Endothelial cell of umbilical vein (primary cell): ENCODE measurements at regions of chr5 and their contacts with region 1.

Region 1: GRCh38 chr5:158074992-158075769 is 216.2 kb upstream of the CLINT1 start:
- DNase-seq: peak; percentile 92
- H3K4me3 ChIP-seq: peak overlapping the region in 2 of 3 experiments; percentile 8 to 50
- H3K27ac ChIP-seq: peak overlapping the region; percentile 97
- H3K4me1 ChIP-seq: peaks cover 18% of the 10 kb centered on the region
- H3K27me3 ChIP-seq: no peaks in the 10 kb centered on the region
- CTCF ChIP-seq: peak; percentile 86 to 87
- POLR2A ChIP-seq: no peak

Region 2: GRCh38 chr5:157354800-157355199 is 720.4 kb before region 1 on chr5:
- CTCF ChIA-PET with region 1: no interaction called
- POLR2A ChIA-PET with region 1: no interaction called
- dilution Hi-C with region 1: no loop called
- intact Hi-C with region 1: no loop called
- DNase-seq: no peak
- H3K4me3 ChIP-seq: no peak overlapping the region
- H3K27ac ChIP-seq: no peak overlapping the region
- H3K4me1 ChIP-seq: peaks cover 13% of the 10 kb centered on the region
- H3K27me3 ChIP-seq: no peaks in the 10 kb centered on the region
- CTCF ChIP-seq: peak; percentile 17 to 31
- POLR2A ChIP-seq: no peak

Region 3: DNA sequence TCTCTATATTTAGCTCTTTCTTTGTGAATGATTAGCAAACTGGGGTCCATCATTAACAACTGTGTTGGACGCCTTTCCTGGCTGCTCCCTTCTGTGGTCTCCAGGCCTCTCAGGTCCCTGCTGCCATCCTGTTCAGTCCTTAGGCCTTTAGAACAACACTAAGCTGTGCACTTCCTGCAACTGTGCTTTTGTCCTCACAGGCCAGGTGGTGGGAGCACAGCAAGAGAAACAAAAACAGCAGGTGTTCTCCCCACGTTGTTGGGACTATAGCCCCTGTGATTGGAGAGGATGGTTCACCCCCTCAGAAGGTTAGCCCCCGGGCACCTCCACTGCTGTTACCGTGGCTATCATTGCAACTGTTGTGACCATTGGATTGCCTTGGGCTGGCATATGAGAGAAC is 174.5 kb before region 1 on chr5:
- CTCF ChIA-PET with region 1: no interaction called
- POLR2A ChIA-PET with region 1: no interaction called
- dilution Hi-C with region 1: no loop called
- intact Hi-C with region 1: no loop called
- DNase-seq: no peak
- H3K4me3 ChIP-seq: no peak overlapping the region
- H3K27ac ChIP-seq: no peak overlapping the region
- H3K4me1 ChIP-seq: no peaks in the 10 kb centered on the region
- H3K27me3 ChIP-seq: peaks cover 0 to 3% of the 10 kb centered on the region in 2 experiments
- CTCF ChIP-seq: no peak
- POLR2A ChIP-seq: no peak

Region 4: GRCh38 chr5:157994906-157995519 is 80.2 kb before region 1 on chr5:
- CTCF ChIA-PET with region 1: no interaction called
- POLR2A ChIA-PET with region 1: no interaction called
- dilution Hi-C with region 1: no loop called
- intact Hi-C with region 1: loop called (anchors 1 kb)
- DNase-seq: peak; percentile 63
- H3K4me3 ChIP-seq: no peak overlapping the region
- H3K27ac ChIP-seq: no peak overlapping the region
- H3K4me1 ChIP-seq: no peaks in the 10 kb centered on the region
- H3K27me3 ChIP-seq: no peaks in the 10 kb centered on the region
- CTCF ChIP-seq: peak; percentile 63 to 79
- POLR2A ChIP-seq: no peak

Region 5: GRCh38 chr5:158096835-158097234 is 21.7 kb after region 1 on chr5:
- CTCF ChIA-PET with region 1: interaction called, 16 read pairs
- POLR2A ChIA-PET with region 1: no interaction called
- dilution Hi-C with region 1: no loop called
- intact Hi-C with region 1: no loop called
- DNase-seq: no peak
- H3K4me3 ChIP-seq: no peak overlapping the region
- H3K27ac ChIP-seq: no peak overlapping the region
- H3K4me1 ChIP-seq: no peaks in the 10 kb centered on the region
- H3K27me3 ChIP-seq: no peaks in the 10 kb centered on the region
- CTCF ChIP-seq: no peak
- POLR2A ChIP-seq: no peak

Region 6: GRCh38 chr5:158154226-158155005 is 79.2 kb after region 1 on chr5:
- CTCF ChIA-PET with region 1: interaction called, 14 read pairs
- POLR2A ChIA-PET with region 1: no interaction called
- dilution Hi-C with region 1: no loop called
- intact Hi-C with region 1: no loop called
- DNase-seq: peak; percentile 58
- H3K4me3 ChIP-seq: no peak overlapping the region
- H3K27ac ChIP-seq: no peak overlapping the region
- H3K4me1 ChIP-seq: no peaks in the 10 kb centered on the region
- H3K27me3 ChIP-seq: no peaks in the 10 kb centered on the region
- CTCF ChIP-seq: no peak
- POLR2A ChIP-seq: no peak

Region 7: DNA sequence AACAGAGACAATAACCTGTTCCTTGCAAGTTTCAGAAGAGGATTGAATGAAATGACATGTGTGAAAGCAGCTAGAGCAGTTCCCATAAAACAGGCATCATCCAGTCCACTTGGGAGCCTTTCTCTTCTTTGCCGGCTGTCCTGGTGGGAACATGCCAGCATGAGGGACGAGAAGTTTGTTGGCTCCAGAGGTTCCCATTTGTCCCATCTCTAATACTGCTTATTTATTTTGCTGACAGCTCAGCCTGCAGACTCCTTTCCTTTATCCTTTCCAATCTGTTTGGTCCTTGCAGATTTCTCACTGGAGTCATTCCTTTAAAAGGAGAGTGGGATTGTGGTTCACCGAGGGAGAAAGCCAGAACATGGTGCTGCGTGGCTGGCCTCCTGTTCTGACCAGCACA is 105.2 kb after region 1 on chr5:
- CTCF ChIA-PET with region 1: interaction called, 97 read pairs
- POLR2A ChIA-PET with region 1: no interaction called
- dilution Hi-C with region 1: no loop called
- intact Hi-C with region 1: loop called (anchors 1 kb)
- DNase-seq: no peak
- H3K4me3 ChIP-seq: no peak overlapping the region
- H3K27ac ChIP-seq: no peak overlapping the region
- H3K4me1 ChIP-seq: no peaks in the 10 kb centered on the region
- H3K27me3 ChIP-seq: peaks cover 0 to 2% of the 10 kb centered on the region in 2 experiments
- CTCF ChIP-seq: no peak
- POLR2A ChIP-seq: no peak

Region 8: DNA sequence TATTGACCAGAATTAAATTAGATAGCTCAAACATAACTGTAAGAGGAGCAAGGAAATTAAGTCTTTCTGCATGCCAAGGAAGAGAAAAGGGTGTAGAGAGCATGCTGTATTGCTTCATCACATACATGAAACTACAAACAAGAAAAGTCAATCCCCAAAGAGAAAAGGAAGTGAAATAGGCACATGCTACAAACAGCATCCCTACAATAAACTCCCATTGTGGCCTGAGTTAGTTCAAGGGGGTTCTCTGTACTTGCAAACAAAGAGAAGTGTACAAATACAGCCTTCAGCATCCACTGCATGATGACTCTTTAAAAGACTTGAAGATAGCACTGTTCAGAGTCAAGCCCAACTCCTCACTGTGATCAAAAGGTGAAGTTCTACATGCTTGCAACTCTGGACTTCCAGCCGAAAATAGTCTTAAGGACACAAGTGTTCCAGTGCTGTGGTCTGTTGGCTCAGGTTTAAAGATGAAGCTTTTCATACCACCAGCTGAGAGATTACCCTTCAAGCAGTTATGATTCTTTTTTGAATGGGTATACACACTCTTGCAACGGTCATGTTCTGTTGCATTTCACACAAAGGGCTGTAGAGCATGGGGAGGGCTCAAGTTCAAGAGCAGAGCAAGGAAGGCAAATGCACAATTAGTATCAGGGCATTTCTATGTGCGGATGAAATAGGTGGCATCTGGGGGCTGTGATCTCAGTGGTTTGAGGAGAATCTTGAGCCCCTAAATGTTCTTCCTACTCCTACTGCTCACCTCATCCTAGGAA is 490.0 kb after region 1 on chr5:
- CTCF ChIA-PET with region 1: no interaction called
- POLR2A ChIA-PET with region 1: no interaction called
- dilution Hi-C with region 1: no loop called
- intact Hi-C with region 1: no loop called
- DNase-seq: no peak
- H3K4me3 ChIP-seq: no peak overlapping the region
- H3K27ac ChIP-seq: no peak overlapping the region
- H3K4me1 ChIP-seq: no peaks in the 10 kb centered on the region
- H3K27me3 ChIP-seq: no peaks in the 10 kb centered on the region
- CTCF ChIP-seq: no peak
- POLR2A ChIP-seq: no peak

Region 9: GRCh38 chr5:159100025-159100781 is 1025.0 kb after region 1 on chr5:
- CTCF ChIA-PET with region 1: interaction called, 110 read pairs
- POLR2A ChIA-PET with region 1: no interaction called
- dilution Hi-C with region 1: no loop called
- intact Hi-C with region 1: loop called (anchors 1 kb)
- DNase-seq: peak; percentile 87
- H3K4me3 ChIP-seq: peak overlapping the region; percentile 26 to 67 (median 38)
- H3K27ac ChIP-seq: no peak overlapping the region
- H3K4me1 ChIP-seq: peaks cover 12% of the 10 kb centered on the region
- H3K27me3 ChIP-seq: peaks cover 65 to 70% of the 10 kb centered on the region in 2 experiments
- CTCF ChIP-seq: no peak
- POLR2A ChIP-seq: no peak